ENCODE measurements at regions of chr1 and their contacts with region 1.

Region 1: GRCh38 chr1:201254625-201255506 is 28.4 kb upstream of the PKP1 start:
- DNase-seq: peak; percentile 37 to 71 (median 68)
- ATAC-seq: peak; percentile 77
- H3K4me3 ChIP-seq: no peak overlapping the region
- H3K27ac ChIP-seq: no peak overlapping the region
- H3K4me1 ChIP-seq: peaks cover 5% of the 10 kb centered on the region
- H3K27me3 ChIP-seq: no peaks in the 10 kb centered on the region
- CTCF ChIP-seq: peak; percentile 86 to 96 (median 93)
- POLR2A ChIP-seq: no peak

Region 2: GRCh38 chr1:201085916-201086735 is 168.7 kb before region 1 on chr1:
- intact Hi-C with region 1: no loop called
- DNase-seq: peak; percentile 78 to 89 (median 82)
- ATAC-seq: peak; percentile 92
- H3K4me3 ChIP-seq: no peak overlapping the region
- H3K27ac ChIP-seq: no peak overlapping the region
- H3K4me1 ChIP-seq: no peaks in the 10 kb centered on the region
- H3K27me3 ChIP-seq: no peaks in the 10 kb centered on the region
- CTCF ChIP-seq: peak; percentile 63 to 89 (median 74)
- POLR2A ChIP-seq: no peak

Region 3: DNA sequence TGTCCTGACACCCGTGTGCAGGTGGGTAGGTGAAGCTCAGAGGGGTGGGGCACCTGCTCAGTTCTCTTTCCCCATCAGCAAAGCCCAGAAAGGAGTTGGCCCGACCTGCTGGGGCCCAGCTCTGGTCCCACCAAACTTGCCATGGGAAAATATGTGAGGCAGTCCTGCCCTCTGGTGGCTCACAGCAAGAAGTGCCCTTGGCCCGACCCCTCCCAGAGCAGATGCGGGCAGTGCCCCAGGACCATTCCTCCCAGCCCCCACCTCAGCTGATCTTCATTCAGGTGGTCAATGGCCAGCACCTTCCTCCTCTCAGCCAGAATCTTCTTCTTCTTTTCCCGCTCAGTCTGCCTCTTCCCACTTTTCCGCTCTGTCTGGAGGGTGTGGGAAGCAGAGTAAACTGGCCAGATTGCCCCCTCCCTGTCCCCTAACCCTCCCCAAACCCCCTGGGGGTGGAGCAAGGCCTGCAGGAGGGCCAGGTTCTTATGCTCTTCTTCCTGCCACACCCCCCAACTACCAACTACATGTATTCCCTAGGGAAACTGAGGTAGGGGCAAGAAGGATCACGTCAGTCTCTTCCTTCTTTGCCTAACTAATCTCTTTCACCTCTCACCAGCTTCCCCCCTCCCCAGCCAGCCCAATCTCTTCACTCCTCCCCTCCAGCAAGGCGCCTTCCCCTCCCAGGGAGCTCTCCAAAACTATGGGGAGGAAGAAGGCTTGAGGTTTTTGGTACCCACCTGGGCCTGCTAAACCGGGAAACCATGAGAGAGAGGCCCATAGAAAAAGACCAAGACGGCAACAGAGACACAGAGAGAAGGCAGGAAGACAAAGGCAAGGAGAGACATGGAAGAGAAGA is 107.0 kb after region 1 on chr1:
- intact Hi-C with region 1: loop called (anchors 5 kb)
- DNase-seq: peak; percentile 36 to 55 (median 44)
- ATAC-seq: peak; percentile 64
- H3K4me3 ChIP-seq: no peak overlapping the region
- H3K27ac ChIP-seq: no peak overlapping the region
- H3K4me1 ChIP-seq: no peaks in the 10 kb centered on the region
- H3K27me3 ChIP-seq: no peaks in the 10 kb centered on the region
- CTCF ChIP-seq: peak; percentile 56 to 80 (median 70)
- POLR2A ChIP-seq: no peak

Region 4: DNA sequence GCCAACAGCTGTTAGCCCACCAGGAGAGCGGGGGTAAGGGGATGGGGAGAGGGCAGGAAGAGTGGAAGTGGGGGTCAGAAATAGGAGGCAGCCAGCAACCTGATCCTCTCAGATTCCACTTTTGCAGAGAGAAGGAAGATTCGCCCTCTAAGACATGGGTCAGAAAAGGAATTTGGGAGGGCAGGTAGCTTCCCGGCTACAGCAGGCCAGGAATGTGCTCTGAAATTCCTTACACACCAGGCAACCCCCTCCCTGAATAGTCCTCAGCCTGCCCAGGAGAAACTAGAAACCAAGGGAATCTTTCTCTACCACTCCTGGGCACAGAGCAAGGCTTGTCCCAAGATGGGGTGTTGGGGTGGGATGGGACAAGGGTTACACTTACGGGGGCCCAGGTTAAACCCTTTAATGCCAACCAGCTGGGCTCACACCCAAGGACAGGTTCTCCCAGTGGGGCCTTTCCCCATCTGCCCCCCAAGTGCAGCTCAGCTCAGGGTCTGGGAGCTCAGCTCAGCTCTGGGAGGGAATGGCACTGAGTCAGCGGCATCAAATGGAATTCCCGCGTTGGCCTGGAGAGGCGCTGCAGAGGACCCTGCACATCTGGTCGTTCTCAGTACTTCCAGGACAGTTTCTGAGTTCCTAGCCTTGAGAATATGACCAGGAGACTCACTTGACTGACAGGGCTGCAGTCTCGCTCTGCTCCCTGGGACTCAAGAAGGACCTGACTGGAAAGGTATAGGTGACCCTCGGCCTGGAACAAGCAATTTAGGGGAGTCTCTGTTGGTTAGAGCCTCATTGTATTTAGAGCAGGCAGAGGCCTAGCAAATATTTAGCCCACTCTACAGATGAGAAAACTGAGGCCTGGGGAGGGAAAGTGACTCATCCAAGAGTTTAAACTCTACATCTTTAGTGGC is 121.9 kb after region 1 on chr1:
- intact Hi-C with region 1: no loop called
- DNase-seq: peak; percentile 37 to 54 (median 48)
- ATAC-seq: peak; percentile 57
- H3K4me3 ChIP-seq: no peak overlapping the region
- H3K27ac ChIP-seq: no peak overlapping the region
- H3K4me1 ChIP-seq: peaks cover 17% of the 10 kb centered on the region
- H3K27me3 ChIP-seq: no peaks in the 10 kb centered on the region
- CTCF ChIP-seq: peak in 6 of 7 experiments; percentile 31 to 57 (median 50)
- POLR2A ChIP-seq: no peak

Measured in body of pancreas (tissue), 4 donors.